ENCODE measurements at regions of chr11 and their contacts with region 1.

Region 1: GRCh38 chr11:15150507-15150906 is 35.8 kb downstream of the INSC start:
- DNase-seq: no peak
- ATAC-seq: no peak
- H3K4me3 ChIP-seq: no peak overlapping the region
- H3K27ac ChIP-seq: no peak overlapping the region
- H3K4me1 ChIP-seq: no peaks in the 10 kb centered on the region
- H3K27me3 ChIP-seq: no peaks in the 10 kb centered on the region
- CTCF ChIP-seq: no peak
- POLR2A ChIP-seq: no peak

Region 2: DNA sequence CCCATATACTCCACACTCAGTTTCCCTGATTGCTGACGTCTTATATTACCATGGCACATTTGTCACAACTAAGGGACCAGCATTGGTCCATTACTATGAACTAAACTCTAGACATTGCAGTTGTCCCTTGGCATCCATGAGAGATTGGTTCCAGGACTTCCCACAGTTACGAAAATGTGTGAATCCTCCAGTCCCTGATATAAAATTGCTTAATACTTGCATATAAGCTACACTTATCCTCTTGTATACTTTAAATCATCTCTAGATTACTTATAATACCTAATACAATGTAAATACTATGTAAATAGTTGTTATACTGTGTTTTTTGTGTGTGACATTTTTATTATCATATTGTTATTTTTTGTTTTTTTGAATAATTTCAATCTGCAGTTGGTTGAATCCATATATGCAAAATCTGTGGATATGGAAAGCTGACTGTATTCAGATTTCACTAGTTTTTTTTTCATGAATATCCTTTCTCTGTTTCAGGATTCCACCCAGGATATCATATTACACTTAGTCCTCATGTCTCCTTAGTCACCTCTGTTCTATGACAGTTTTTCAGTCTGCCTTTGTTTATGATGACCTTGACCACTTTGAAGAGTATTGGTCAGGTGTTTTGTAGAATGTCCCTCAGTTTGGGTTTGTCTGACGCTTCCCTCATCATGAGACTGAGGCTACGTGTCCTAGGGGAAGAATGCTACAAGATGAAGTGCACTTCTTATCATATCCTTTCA is 19.5 kb after region 1 on chr11:
- intact Hi-C with region 1: loop called in 1 of 10 experiments (anchors 2 kb)
- DNase-seq: no peak
- ATAC-seq: no peak
- H3K4me3 ChIP-seq: no peak overlapping the region
- H3K27ac ChIP-seq: no peak overlapping the region
- H3K4me1 ChIP-seq: no peaks in the 10 kb centered on the region
- H3K27me3 ChIP-seq: peaks cover 0 to 4% (median 0%) of the 10 kb centered on the region in 9 donors
- CTCF ChIP-seq: no peak
- POLR2A ChIP-seq: no peak

Measured in heart left ventricle (tissue), 16 donors.